CD4-positive, alpha-beta memory T cell (primary cell): ENCODE measurements at regions of chr6 and their contacts with region 1.

Region 1: GRCh38 chr6:111793711-111794111 is 79.5 kb downstream of the FYN start:
- DNase-seq: peak; percentile 45 to 70 (median 49)
- H3K4me3 ChIP-seq: peak overlapping the region; percentile 42 to 52
- H3K4me3 Mint-ChIP-seq: peak overlapping the region; percentile 63 to 84 (median 81)
- H3K27ac ChIP-seq: peak overlapping the region; percentile 45
- H3K27ac Mint-ChIP-seq: peak overlapping the region in 6 of 7 donors; percentile 88 to 95 (median 92)
- H3K4me1 ChIP-seq: peaks cover 94% of the 10 kb centered on the region
- H3K4me1 Mint-ChIP-seq: peaks cover 6 to 63% (median 31%) of the 10 kb centered on the region in 4 donors
- H3K27me3 ChIP-seq: no peaks in the 10 kb centered on the region
- H3K27me3 Mint-ChIP-seq: no peaks in the 10 kb centered on the region

Region 2: GRCh38 chr6:111478749-111479148 is 315.0 kb before region 1 on chr6:
- CTCF ChIA-PET with region 1: no interaction called
- POLR2A ChIA-PET with region 1: no interaction called
- intact Hi-C with region 1: no loop called
- DNase-seq: peak; percentile 31 to 54 (median 47)
- H3K4me3 ChIP-seq: no peak overlapping the region
- H3K4me3 Mint-ChIP-seq: peak overlapping the region in 1 of 8 donors; percentile 21
- H3K27ac ChIP-seq: no peak overlapping the region
- H3K27ac Mint-ChIP-seq: peak overlapping the region in 6 of 7 donors; percentile 36 to 86 (median 63)
- H3K4me1 ChIP-seq: peaks cover 29% of the 10 kb centered on the region
- H3K4me1 Mint-ChIP-seq: peaks cover 29 to 41% (median 34%) of the 10 kb centered on the region in 4 donors
- H3K27me3 ChIP-seq: no peaks in the 10 kb centered on the region
- H3K27me3 Mint-ChIP-seq: no peaks in the 10 kb centered on the region

Region 3: DNA sequence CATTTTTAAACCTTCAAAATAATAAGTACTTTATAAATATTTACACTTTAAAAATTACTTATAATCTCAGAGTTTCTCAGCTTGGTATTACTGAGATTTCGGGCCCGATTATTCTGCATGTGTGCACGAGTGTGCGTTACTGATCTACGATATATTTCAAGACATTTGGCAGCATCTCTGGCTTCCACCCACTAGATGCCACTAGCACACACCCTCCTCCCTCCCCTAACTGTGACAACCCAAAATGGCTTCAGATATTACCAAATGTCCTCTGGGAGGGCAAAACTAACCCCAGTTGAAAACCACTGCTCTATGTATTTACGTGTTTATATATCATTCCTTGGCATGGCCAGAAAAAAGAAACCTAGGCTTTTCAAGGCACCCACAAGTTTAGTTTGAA is 16.4 kb before region 1 on chr6:
- CTCF ChIA-PET with region 1: interaction called, 7 read pairs
- POLR2A ChIA-PET with region 1: interaction called, 55 read pairs
- intact Hi-C with region 1: loop called (anchors 2 kb)
- DNase-seq: peak in 3 of 5 donors; percentile 46 to 50 (median 48)
- H3K4me3 ChIP-seq: no peak overlapping the region
- H3K4me3 Mint-ChIP-seq: peak overlapping the region; percentile 31 to 72 (median 62)
- H3K27ac ChIP-seq: peak overlapping the region; percentile 34
- H3K27ac Mint-ChIP-seq: peak overlapping the region in 6 of 7 donors; percentile 76 to 94 (median 90)
- H3K4me1 ChIP-seq: peaks cover 90% of the 10 kb centered on the region
- H3K4me1 Mint-ChIP-seq: peaks cover 67 to 93% (median 79%) of the 10 kb centered on the region in 4 donors
- H3K27me3 ChIP-seq: no peaks in the 10 kb centered on the region
- H3K27me3 Mint-ChIP-seq: no peaks in the 10 kb centered on the region

Region 4: DNA sequence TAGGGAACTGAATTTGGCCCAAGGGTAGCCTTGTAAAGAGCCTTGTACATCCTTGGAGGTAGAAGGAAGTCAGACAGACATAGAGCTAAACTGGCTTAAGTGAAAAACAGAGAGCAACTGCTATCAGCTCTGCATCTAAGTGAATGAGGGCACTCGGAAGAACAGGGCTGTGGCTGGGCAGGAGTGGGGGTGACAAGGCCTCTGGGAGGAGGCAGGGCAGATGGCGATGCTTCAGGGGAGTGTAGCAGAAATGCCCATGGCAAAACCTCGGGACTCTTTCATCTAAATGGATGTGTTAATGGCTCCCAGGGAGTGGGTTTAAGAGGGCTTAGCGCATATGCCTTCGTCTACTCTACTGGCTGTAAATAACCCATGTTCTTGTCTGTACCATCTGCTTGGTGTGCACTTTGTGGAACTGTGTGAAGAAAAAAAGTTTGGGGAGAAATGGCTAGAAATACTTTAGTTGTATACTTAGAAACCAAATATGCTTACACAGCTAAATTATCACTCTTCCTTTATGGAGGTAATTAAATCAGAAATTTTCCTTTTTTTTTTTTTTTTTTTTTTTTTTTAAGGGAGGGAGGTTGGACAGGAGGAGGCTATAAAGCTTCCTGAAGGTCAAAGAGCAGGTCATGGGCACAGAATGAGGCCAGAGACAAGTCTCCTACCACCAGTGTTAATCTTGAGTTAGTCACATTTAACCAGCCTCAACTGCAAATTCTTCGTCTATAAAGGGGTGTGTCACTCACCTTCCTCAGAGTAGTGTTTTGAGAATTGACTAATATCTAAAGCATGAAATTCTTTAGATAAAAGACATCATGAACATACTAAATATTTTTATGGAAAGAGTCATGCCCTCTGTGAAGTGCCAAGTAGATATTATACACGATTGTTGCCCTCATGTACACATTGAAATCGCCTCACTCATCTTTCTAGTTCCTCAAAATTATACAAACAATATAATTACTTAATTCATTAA is 18.6 kb after region 1 on chr6:
- CTCF ChIA-PET with region 1: interaction called, 3 read pairs
- POLR2A ChIA-PET with region 1: interaction called, 4 read pairs
- intact Hi-C with region 1: loop called (anchors 2 kb)
- DNase-seq: peak in 1 of 5 donors; percentile 33
- H3K4me3 ChIP-seq: no peak overlapping the region
- H3K4me3 Mint-ChIP-seq: peak overlapping the region in 7 of 8 donors; percentile 47 to 86 (median 68)
- H3K27ac ChIP-seq: peak overlapping the region; percentile 28
- H3K27ac Mint-ChIP-seq: peak overlapping the region; percentile 83 to 95 (median 94)
- H3K4me1 ChIP-seq: peaks cover 97% of the 10 kb centered on the region
- H3K4me1 Mint-ChIP-seq: peaks cover 61 to 79% (median 74%) of the 10 kb centered on the region in 4 donors
- H3K27me3 ChIP-seq: no peaks in the 10 kb centered on the region
- H3K27me3 Mint-ChIP-seq: no peaks in the 10 kb centered on the region

Region 5: GRCh38 chr6:112018619-112019416 is 225.1 kb after region 1 on chr6:
- CTCF ChIA-PET with region 1: no interaction called
- POLR2A ChIA-PET with region 1: no interaction called
- intact Hi-C with region 1: no loop called
- DNase-seq: no peak
- H3K4me3 ChIP-seq: no peak overlapping the region
- H3K4me3 Mint-ChIP-seq: no peak overlapping the region
- H3K27ac ChIP-seq: no peak overlapping the region
- H3K27ac Mint-ChIP-seq: peak overlapping the region in 2 of 7 donors; percentile 59 to 73
- H3K4me1 ChIP-seq: peaks cover 36% of the 10 kb centered on the region
- H3K4me1 Mint-ChIP-seq: peaks cover 21 to 56% (median 41%) of the 10 kb centered on the region in 4 donors
- H3K27me3 ChIP-seq: no peaks in the 10 kb centered on the region
- H3K27me3 Mint-ChIP-seq: no peaks in the 10 kb centered on the region

Region 6: GRCh38 chr6:113147544-113147943 is 1353.8 kb after region 1 on chr6:
- CTCF ChIA-PET with region 1: no interaction called
- POLR2A ChIA-PET with region 1: no interaction called
- intact Hi-C with region 1: no loop called
- DNase-seq: no peak
- H3K4me3 ChIP-seq: no peak overlapping the region
- H3K4me3 Mint-ChIP-seq: no peak overlapping the region
- H3K27ac ChIP-seq: no peak overlapping the region
- H3K27ac Mint-ChIP-seq: no peak overlapping the region
- H3K4me1 ChIP-seq: no peaks in the 10 kb centered on the region
- H3K4me1 Mint-ChIP-seq: no peaks in the 10 kb centered on the region
- H3K27me3 ChIP-seq: no peaks in the 10 kb centered on the region
- H3K27me3 Mint-ChIP-seq: no peaks in the 10 kb centered on the region